Kidney (tissue), 22 donors: ENCODE measurements at regions of chr16 and their contacts with region 1.

Region 1: DNA sequence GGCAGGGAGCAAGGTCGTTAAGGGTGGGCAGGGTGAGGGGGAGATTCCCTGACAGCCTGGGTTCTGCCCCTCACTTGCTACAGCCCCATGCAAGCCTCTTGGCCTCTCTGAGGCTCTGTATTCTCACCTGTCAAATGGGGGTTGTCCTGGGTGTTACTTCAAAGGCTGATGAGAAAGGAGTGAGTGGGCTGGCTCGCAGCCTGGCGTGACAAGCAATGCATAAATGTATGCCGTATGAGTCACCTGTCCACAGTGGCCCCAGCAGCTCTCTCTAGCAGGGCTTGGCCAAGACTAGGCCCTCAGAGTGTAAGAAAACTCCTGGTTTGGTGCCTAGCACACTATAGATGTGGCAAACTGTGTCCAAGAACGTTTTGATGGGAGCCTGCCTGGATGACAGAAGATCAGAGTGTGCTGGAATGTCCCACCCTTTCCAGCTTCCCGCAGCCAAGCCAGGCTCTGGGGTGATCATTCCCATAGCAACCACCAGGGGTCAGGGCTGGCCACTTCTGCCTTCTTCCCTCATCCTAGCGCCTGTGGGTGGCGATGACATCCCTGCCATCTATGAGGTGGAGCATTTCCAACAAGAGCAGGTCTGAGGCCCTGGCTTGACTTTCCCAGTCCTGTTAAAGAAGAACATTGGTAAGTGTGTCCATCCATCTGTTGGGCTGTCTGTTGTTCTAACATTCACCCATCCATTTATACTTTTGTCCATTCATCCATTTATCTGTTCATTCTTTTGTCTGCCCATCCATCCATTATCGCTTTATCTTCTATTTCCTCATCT is 37.2 kb upstream of the ADGRG1 start:
- DNase-seq: peak; percentile 80 to 88 (median 86)
- H3K4me3 ChIP-seq: no peak overlapping the region
- H3K27ac ChIP-seq: no peak overlapping the region
- H3K4me1 ChIP-seq: peaks cover 0 to 6% (median 0%) of the 10 kb centered on the region in 3 donors
- H3K27me3 ChIP-seq: no peaks in the 10 kb centered on the region
- CTCF ChIP-seq: peak; percentile 96

Region 2: GRCh38 chr16:57648590-57649442 is 57.5 kb after region 1 on chr16:
- intact Hi-C with region 1: loop called (anchors 5 kb)
- DNase-seq: peak; percentile 79 to 91 (median 87)
- H3K4me3 ChIP-seq: no peak overlapping the region
- H3K27ac ChIP-seq: peak overlapping the region; percentile 14 to 69
- H3K4me1 ChIP-seq: peaks cover 0 to 26% (median 9%) of the 10 kb centered on the region in 3 donors
- H3K27me3 ChIP-seq: no peaks in the 10 kb centered on the region
- CTCF ChIP-seq: peak; percentile 100

Region 3: GRCh38 chr16:57700781-57701551 is 109.7 kb after region 1 on chr16:
- intact Hi-C with region 1: no loop called
- DNase-seq: peak in 1 of 5 donors; percentile 46
- H3K4me3 ChIP-seq: no peak overlapping the region
- H3K27ac ChIP-seq: no peak overlapping the region
- H3K4me1 ChIP-seq: no peaks in the 10 kb centered on the region
- H3K27me3 ChIP-seq: no peaks in the 10 kb centered on the region
- CTCF ChIP-seq: no peak